Dorsolateral prefrontal cortex (tissue), 120 donors: ENCODE measurements at regions of chr7 and their contacts with region 1.

Region 1: DNA sequence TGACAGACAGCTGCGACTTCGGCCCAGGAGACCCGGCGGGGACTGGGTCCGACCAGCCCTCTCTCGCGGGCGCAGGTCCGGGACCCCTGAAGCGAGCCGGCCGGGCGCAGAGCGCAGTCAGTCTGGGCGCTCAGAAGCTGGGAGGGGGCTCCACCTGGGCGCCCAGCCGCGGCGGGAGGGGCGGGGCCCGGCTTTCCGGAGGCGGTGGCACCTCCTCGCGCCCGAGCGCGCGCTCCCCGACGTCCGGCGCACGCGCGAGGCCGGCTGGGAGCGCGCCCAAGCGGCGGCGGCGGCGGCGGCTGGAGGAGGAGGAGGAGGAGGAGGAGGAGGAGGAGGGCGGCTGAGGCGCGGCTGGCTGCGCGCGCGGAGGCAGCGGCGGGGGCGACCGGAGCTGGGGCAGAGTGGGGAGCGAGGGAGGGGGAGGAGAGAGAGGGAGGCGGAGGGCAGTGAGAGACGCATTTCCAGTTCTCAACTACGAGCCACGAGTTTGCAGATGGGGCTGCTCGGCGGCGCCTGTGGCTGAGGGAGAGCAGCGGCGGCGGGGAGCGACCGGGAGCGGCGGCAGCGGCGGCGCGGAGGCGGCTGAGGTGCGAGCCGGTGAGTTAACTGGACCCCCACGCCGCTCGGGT is at the start of gene PALS2:
- DNase-seq: peak in 9 of 10 donors; percentile 23 to 78 (median 58)
- H3K4me3 ChIP-seq: peak within 1 kb of the TSS; percentile 62 to 95 (median 76)
- H3K27ac ChIP-seq: peak within 1 kb of the TSS in 58 of 59 donors; percentile 25 to 94 (median 85)
- H3K27me3 ChIP-seq: no peaks in the 10 kb centered on the region
- CTCF ChIP-seq: peak in 2 of 56 donors; percentile 8 to 9
- total RNA-seq, gene PALS2: 46.4 to 226 (median 122) TPM

Region 2: DNA sequence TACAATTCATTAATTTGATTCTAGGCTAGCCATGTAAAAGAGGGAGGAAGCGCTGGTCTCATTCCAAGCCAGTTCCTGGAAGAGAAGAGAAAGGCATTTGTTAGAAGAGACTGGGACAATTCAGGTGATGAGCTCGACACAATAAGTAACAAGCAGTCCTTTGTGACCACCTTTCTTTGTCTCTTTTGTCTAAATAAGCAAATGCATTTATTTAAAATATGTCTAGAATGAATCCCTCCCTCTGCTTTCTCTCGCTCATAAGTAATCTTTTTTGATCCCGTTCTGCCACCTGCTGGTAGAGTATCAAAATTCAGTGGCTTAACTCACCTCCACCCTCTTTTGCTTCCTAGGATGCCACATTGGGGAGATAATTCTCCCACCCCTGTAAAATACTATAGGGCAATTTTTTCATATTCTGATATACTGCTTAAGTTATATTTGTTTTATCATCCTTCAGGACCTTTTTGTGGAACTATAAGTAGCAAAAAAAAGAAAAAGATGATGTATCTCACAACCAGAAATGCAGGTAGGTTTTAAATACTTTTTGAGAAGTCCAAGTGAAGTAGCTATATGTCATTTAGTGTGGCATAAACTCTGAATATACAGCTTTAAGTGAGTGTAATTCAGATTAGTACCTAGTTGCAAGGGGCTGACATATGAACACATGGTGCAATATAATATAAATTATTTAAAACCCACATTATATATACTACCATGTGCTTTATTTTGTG is 92.6 kb after region 1 on chr7:
- intact Hi-C with region 1: loop called (anchors 10 kb)
- DNase-seq: peak in 1 of 10 donors; percentile 5
- H3K4me3 ChIP-seq: no peak overlapping the region
- H3K27ac ChIP-seq: no peak overlapping the region
- H3K27me3 ChIP-seq: peaks cover 0 to 3% (median 0%) of the 10 kb centered on the region in 45 donors
- CTCF ChIP-seq: peak; percentile 62 to 96 (median 81)

Region 3: DNA sequence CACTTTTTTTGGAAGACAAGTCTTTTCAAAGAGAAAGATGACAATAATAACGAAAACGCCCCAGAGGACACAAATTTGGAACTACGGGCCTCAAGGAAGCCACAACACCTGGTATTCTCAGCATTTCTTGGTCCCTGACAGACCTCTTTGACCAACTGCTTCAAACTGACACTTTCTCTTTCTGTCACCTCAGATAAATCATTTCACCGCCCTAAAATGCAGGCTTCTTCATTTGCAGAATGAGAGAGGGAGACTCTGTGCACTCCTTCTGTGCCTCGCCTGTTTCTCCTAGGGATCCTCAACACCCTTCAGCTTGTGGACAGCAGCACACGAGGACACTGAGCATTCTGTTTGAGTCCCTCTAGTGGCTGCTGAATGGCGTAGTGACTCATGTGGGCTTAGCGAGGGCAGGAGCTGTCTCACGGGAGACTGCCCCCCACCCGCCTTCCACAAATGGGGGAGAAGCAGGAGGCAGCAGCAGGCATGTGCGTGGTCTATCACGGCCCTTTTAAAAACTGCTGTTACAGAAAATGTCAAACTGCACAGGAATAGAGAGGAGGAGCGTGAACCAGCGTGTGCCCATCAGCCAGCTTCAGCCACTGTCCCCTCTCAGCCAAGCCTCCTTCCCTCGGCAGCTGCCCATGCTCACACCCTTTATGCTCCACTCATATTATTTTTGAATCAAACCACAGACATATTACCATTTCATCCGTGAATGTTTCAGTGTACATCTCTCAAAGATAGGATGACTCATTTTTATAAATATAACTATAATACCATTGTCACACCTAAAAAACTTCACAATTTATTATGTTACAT is 142.8 kb after region 1 on chr7:
- intact Hi-C with region 1: loop called (anchors 5 to 10 kb)
- DNase-seq: peak in 4 of 10 donors; percentile 41 to 61 (median 54)
- H3K4me3 ChIP-seq: peak overlapping the region in 2 of 59 donors; percentile 11 to 12
- H3K27ac ChIP-seq: peak overlapping the region in 1 of 59 donors; percentile 31
- H3K27me3 ChIP-seq: peaks cover 0 to 2% (median 0%) of the 10 kb centered on the region in 45 donors
- CTCF ChIP-seq: peak in 54 of 56 donors; percentile 20 to 73 (median 49)

Region 4: GRCh38 chr7:24722386-24723177 is 149.5 kb after region 1 on chr7:
- intact Hi-C with region 1: loop called (anchors 5 to 10 kb)
- DNase-seq: peak in 1 of 10 donors; percentile 54
- H3K4me3 ChIP-seq: no peak overlapping the region
- H3K27ac ChIP-seq: no peak overlapping the region
- H3K27me3 ChIP-seq: peaks cover 0 to 3% (median 0%) of the 10 kb centered on the region in 45 donors
- CTCF ChIP-seq: peak in 51 of 56 donors; percentile 10 to 74 (median 48)